Activated naive CD4-positive, alpha-beta T cell treated with anti-CD3 and anti-CD28 coated beads for 36 hours (primary cell): ENCODE measurements at regions of chr15 and their contacts with region 1.

Region 1: GRCh38 chr15:74460871-74461846 is at the start of gene UBL7:
- DNase-seq: peak; percentile 99
- H3K4me3 Mint-ChIP-seq: peak within 1 kb of the TSS; percentile 94
- H3K27ac Mint-ChIP-seq: peak within 1 kb of the TSS; percentile 97
- H3K4me1 Mint-ChIP-seq: peaks cover 46% of the 10 kb centered on the region
- H3K27me3 Mint-ChIP-seq: no peaks in the 10 kb centered on the region
- total RNA-seq, gene UBL7: 43.0 to 47.0 TPM

Region 2: GRCh38 chr15:74373731-74374647 is 87.2 kb before region 1 on chr15:
- CTCF ChIA-PET with region 1: interaction called, 8 read pairs
- intact Hi-C with region 1: loop called (anchors 1 kb)
- DNase-seq: peak; percentile 97
- H3K4me3 Mint-ChIP-seq: peak overlapping the region; percentile 75
- H3K27ac Mint-ChIP-seq: no peak overlapping the region
- H3K4me1 Mint-ChIP-seq: peaks cover 31% of the 10 kb centered on the region
- H3K27me3 Mint-ChIP-seq: peaks cover 1% of the 10 kb centered on the region

Region 3: DNA sequence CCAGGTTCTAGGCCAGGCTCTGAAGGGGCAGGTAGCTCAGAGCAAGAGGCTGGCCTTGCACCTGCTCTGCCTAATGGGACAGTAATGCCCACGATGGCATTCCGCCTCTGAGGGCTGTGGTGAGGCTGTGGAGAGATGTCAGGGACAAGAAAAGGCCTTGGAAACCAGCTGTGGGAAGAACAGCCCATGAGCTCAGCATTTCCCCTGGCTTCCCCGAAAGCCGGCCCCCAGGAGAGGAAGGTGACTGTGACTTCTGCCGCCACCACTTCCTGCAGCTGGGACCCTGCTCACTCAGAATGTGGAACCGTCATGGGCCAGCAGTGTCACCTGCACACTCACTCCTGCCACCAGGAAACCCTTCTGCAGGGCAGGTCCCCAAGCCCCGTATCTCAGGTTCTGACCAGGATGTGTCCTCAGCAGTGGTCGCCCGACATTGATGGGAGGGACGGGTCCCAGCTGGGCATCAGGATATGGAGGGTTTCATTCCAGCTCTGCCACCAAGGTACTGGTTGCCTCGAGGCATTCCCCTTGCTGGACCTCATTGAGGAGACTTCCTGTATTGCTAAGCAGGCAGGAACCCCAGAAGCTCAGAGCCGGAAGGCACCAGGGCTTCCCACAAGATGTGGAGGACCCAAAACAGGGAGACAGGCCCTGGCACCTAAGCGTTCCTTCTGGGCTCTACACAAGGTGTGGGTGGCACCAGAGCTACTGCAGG is 58.1 kb before region 1 on chr15:
- CTCF ChIA-PET with region 1: interaction called, 3 read pairs
- intact Hi-C with region 1: loop called (anchors 1 kb)
- DNase-seq: peak; percentile 97
- H3K4me3 Mint-ChIP-seq: peak overlapping the region; percentile 53
- H3K27ac Mint-ChIP-seq: peak overlapping the region; percentile 87
- H3K4me1 Mint-ChIP-seq: peaks cover 65% of the 10 kb centered on the region
- H3K27me3 Mint-ChIP-seq: no peaks in the 10 kb centered on the region

Region 4: GRCh38 chr15:74489518-74490338 is 28.6 kb after region 1 on chr15:
- CTCF ChIA-PET with region 1: interaction called, 3 read pairs
- intact Hi-C with region 1: loop called (anchors 2 kb)
- DNase-seq: peak; percentile 83
- H3K4me3 Mint-ChIP-seq: no peak overlapping the region
- H3K27ac Mint-ChIP-seq: no peak overlapping the region
- H3K4me1 Mint-ChIP-seq: peaks cover 9% of the 10 kb centered on the region
- H3K27me3 Mint-ChIP-seq: no peaks in the 10 kb centered on the region

Region 5: GRCh38 chr15:74598126-74598842 is 137.1 kb after region 1 on chr15:
- CTCF ChIA-PET with region 1: no interaction called
- intact Hi-C with region 1: loop called (anchors 1 kb)
- DNase-seq: peak; percentile 95
- H3K4me3 Mint-ChIP-seq: peak overlapping the region; percentile 100
- H3K27ac Mint-ChIP-seq: peak overlapping the region; percentile 99
- H3K4me1 Mint-ChIP-seq: peaks cover 20% of the 10 kb centered on the region
- H3K27me3 Mint-ChIP-seq: no peaks in the 10 kb centered on the region

Region 6: GRCh38 chr15:74787251-74788041 is 326.3 kb after region 1 on chr15:
- CTCF ChIA-PET with region 1: no interaction called
- intact Hi-C with region 1: loop called (anchors 1 kb)
- DNase-seq: peak; percentile 98
- H3K4me3 Mint-ChIP-seq: peak overlapping the region; percentile 93
- H3K27ac Mint-ChIP-seq: peak overlapping the region; percentile 99
- H3K4me1 Mint-ChIP-seq: peaks cover 55% of the 10 kb centered on the region
- H3K27me3 Mint-ChIP-seq: no peaks in the 10 kb centered on the region

Region 7: GRCh38 chr15:75625542-75626347 is 1164.6 kb after region 1 on chr15 and contains the start of gene SNUPN:
- CTCF ChIA-PET with region 1: no interaction called
- intact Hi-C with region 1: loop called (anchors 1 kb)
- DNase-seq: peak; percentile 98
- H3K4me3 Mint-ChIP-seq: peak within 1 kb of the TSS; percentile 95
- H3K27ac Mint-ChIP-seq: peak within 1 kb of the TSS; percentile 99
- H3K4me1 Mint-ChIP-seq: peaks cover 41% of the 10 kb centered on the region
- H3K27me3 Mint-ChIP-seq: no peaks in the 10 kb centered on the region
- total RNA-seq, gene SNUPN: 28.5 to 33.1 TPM